Activated B cell treated with CpG ODN at 0.5 μM for 24 hours (primary cell): ENCODE measurements at regions of chr1 and their contacts with region 1.

Region 1: GRCh38 chr1:95233737-95234500 is at the start of gene RWDD3:
- DNase-seq: peak; percentile 97
- ATAC-seq: peak; percentile 96
- H3K4me3 Mint-ChIP-seq: peak within 1 kb of the TSS; percentile 92
- H3K27ac Mint-ChIP-seq: peak within 1 kb of the TSS; percentile 84
- H3K4me1 Mint-ChIP-seq: peaks cover 38% of the 10 kb centered on the region
- H3K27me3 Mint-ChIP-seq: peaks cover 4% of the 10 kb centered on the region
- CTCF ChIP-seq: peak; percentile 37
- total RNA-seq, gene RWDD3: 17.1 and 18.9 TPM in 2 replicates

Region 2: GRCh38 chr1:94417978-94418663 is 815.8 kb before region 1 on chr1 and contains the start of gene ABCD3:
- CTCF ChIA-PET with region 1: no interaction called
- POLR2A ChIA-PET with region 1: no interaction called
- intact Hi-C with region 1: loop called (anchors 2 kb)
- DNase-seq: peak; percentile 97
- ATAC-seq: peak; percentile 95
- H3K4me3 Mint-ChIP-seq: no peak within 1 kb of the TSS
- H3K27ac Mint-ChIP-seq: no peak within 1 kb of the TSS
- H3K4me1 Mint-ChIP-seq: peaks cover 17% of the 10 kb centered on the region
- H3K27me3 Mint-ChIP-seq: no peaks in the 10 kb centered on the region
- CTCF ChIP-seq: no peak
- total RNA-seq, gene ABCD3: 20.8 and 23.2 TPM in 2 replicates

Region 3: DNA sequence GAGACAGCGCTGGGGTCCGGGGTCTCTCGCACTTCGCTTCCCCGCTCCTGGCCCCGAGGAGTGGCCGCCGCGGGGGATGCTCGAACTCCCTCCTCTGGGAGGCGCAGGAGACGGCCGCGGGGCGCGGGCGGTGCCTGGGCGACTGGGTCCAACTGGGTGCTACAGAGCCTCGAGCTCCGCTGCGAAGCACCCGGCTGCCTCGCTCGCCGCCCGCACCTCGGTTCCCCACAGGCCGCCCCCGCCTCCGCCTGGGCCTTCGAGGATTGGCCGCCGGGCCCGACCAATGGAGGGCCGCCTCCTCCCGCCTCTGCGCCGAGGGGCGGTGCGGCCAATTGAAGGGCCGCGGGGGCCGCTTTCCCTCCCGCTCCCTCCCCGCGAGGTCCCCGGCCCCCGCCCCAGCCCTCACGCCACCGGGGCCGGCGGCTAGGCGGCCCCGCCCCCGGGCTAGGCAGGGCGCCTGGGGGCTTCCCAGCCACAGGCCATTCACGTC is 307.0 kb before region 1 on chr1 and contains the start of gene CNN3:
- CTCF ChIA-PET with region 1: no interaction called
- POLR2A ChIA-PET with region 1: interaction called, 3 read pairs
- intact Hi-C with region 1: loop called (anchors 1 kb)
- DNase-seq: peak; percentile 74
- ATAC-seq: peak; percentile 87
- H3K4me3 Mint-ChIP-seq: peak within 1 kb of the TSS; percentile 86
- H3K27ac Mint-ChIP-seq: peak within 1 kb of the TSS; percentile 86
- H3K4me1 Mint-ChIP-seq: peaks cover 30% of the 10 kb centered on the region
- H3K27me3 Mint-ChIP-seq: peaks cover 15% of the 10 kb centered on the region
- CTCF ChIP-seq: no peak
- total RNA-seq, gene CNN3: 6.2 and 11.8 TPM in 2 replicates

Region 4: GRCh38 chr1:95043141-95043980 is 190.6 kb before region 1 on chr1:
- CTCF ChIA-PET with region 1: interaction called, 15 read pairs
- POLR2A ChIA-PET with region 1: interaction called, 9 read pairs
- intact Hi-C with region 1: no loop called
- DNase-seq: peak; percentile 65
- ATAC-seq: peak; percentile 98
- H3K4me3 Mint-ChIP-seq: no peak overlapping the region
- H3K27ac Mint-ChIP-seq: no peak overlapping the region
- H3K4me1 Mint-ChIP-seq: no peaks in the 10 kb centered on the region
- H3K27me3 Mint-ChIP-seq: no peaks in the 10 kb centered on the region
- CTCF ChIP-seq: peak; percentile 97

Region 5: GRCh38 chr1:95084317-95085176 is 149.4 kb before region 1 on chr1:
- CTCF ChIA-PET with region 1: interaction called, 45 read pairs
- POLR2A ChIA-PET with region 1: interaction called, 11 read pairs
- intact Hi-C with region 1: loop called (anchors 1 kb)
- DNase-seq: no peak
- ATAC-seq: peak; percentile 82
- H3K4me3 Mint-ChIP-seq: no peak overlapping the region
- H3K27ac Mint-ChIP-seq: no peak overlapping the region
- H3K4me1 Mint-ChIP-seq: peaks cover 4% of the 10 kb centered on the region
- H3K27me3 Mint-ChIP-seq: peaks cover 12% of the 10 kb centered on the region
- CTCF ChIP-seq: no peak

Region 6: DNA sequence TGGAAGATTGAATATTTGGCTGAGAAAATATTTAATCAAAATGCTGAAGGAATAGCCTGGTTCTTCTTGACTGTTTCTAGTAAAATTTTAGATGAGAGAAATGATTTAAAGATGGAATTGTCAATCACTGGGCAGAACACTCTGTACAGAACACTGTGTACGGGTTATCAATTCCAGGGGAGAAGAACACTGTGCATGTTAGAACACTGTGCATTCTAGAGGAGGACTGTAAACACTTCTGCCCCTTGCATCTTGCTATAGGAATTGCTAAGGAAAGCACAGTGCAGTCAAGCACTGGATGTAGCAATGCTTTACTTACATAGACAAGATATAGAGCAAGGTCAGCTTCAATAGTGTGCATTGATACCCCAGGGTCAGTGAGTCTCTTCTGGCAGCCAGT is 98.8 kb after region 1 on chr1:
- CTCF ChIA-PET with region 1: no interaction called
- POLR2A ChIA-PET with region 1: no interaction called
- intact Hi-C with region 1: no loop called
- DNase-seq: no peak
- ATAC-seq: no peak
- H3K4me3 Mint-ChIP-seq: no peak overlapping the region
- H3K27ac Mint-ChIP-seq: no peak overlapping the region
- H3K4me1 Mint-ChIP-seq: no peaks in the 10 kb centered on the region
- H3K27me3 Mint-ChIP-seq: no peaks in the 10 kb centered on the region
- CTCF ChIP-seq: no peak

Region 7: GRCh38 chr1:96721416-96722160 is 1487.7 kb after region 1 on chr1 and contains the start of gene PTBP2:
- CTCF ChIA-PET with region 1: no interaction called
- POLR2A ChIA-PET with region 1: no interaction called
- intact Hi-C with region 1: loop called (anchors 5 kb)
- DNase-seq: peak; percentile 85
- ATAC-seq: peak; percentile 91
- H3K4me3 Mint-ChIP-seq: peak within 1 kb of the TSS; percentile 94
- H3K27ac Mint-ChIP-seq: peak within 1 kb of the TSS; percentile 93
- H3K4me1 Mint-ChIP-seq: peaks cover 26% of the 10 kb centered on the region
- H3K27me3 Mint-ChIP-seq: no peaks in the 10 kb centered on the region
- CTCF ChIP-seq: no peak
- total RNA-seq, gene PTBP2: 17.6 and 18.6 TPM in 2 replicates